Aorta (tissue), 5 donors: ENCODE measurements at regions of chr13 and their contacts with region 1.

Region 1: GRCh38 chr13:24270639-24271141 is 38.7 kb upstream of the C1QTNF9 start:
- DNase-seq: peak; percentile 86 to 90
- ATAC-seq: peak; percentile 87
- H3K4me3 ChIP-seq: peak overlapping the region; percentile 46 to 83
- H3K27ac ChIP-seq: peak overlapping the region in 1 of 2 donors; percentile 90
- H3K4me1 ChIP-seq: no peaks in the 10 kb centered on the region
- H3K27me3 ChIP-seq: no peaks in the 10 kb centered on the region

Region 2: DNA sequence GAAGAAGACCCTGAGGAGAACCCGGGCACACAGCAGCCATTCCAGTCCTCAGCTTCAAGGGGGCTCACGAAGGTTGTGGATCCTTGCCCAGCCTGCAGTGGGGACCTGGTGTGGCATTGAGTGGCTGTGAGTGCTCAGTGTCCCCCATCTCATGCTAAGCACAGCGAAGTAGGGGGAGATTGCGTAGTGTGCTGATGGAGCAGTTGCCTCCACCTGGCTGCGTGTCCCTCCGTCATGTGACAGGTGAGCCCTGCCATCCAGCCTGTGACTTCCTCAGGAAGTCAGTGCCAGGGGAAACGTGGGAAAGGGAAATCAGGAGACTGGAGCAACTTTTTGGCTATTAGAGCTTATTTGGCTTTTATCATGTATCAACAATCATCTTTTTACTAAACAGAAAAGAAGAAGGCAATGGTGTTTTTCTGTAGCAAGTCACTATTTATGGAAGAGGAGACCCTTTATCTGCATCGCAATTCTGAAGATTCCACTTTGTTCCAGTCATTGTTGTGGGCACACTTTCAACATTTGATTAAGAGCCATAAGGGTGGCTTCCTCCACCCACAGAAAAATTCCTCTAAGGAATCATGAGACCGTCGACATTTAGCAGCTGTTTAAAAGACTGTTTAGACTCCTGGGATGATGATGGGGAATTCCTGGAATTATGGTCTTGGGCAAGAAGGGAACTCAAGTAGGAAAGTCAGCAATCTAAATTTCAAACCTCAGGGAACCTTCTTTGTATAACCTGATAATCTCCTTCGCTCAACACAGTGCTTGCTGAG is 237.0 kb before region 1 on chr13:
- intact Hi-C with region 1: loop called in 1 of 2 experiments (anchors 5 kb)
- DNase-seq: no peak
- ATAC-seq: no peak
- H3K4me3 ChIP-seq: no peak overlapping the region
- H3K27ac ChIP-seq: peak overlapping the region in 1 of 2 donors; percentile 81
- H3K4me1 ChIP-seq: peaks cover 5 to 7% of the 10 kb centered on the region in 2 donors
- H3K27me3 ChIP-seq: no peaks in the 10 kb centered on the region

Region 3: DNA sequence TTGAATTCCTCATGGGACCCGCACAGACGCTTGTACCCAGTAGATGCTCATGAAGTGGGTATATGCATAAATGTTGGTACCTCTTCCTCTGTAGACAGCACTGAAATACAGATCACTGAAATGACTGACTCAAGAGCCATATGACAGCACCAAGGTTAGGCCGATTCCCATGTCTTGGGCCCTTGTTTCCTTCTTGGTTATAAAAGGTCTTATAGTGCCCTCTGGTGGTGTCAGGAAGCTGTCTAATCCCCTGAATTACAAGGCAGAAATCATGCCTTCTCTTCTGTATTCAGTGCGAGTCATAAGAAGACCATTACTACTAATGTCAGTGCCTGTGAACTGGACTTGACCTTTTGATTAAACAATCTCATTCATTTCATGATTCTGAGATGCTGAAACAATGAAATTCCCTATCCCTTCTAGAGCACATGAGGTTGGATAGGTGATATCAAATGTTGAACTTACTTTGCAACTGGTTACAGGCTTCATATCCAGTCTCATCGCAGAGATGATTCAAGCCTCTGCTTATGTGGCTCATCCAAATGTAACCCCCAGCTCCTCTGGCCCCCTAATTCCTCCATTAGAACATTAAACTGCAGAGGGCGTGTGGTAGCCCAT is 50.5 kb before region 1 on chr13:
- intact Hi-C with region 1: no loop called
- DNase-seq: no peak
- ATAC-seq: peak; percentile 85
- H3K4me3 ChIP-seq: no peak overlapping the region
- H3K27ac ChIP-seq: no peak overlapping the region
- H3K4me1 ChIP-seq: no peaks in the 10 kb centered on the region
- H3K27me3 ChIP-seq: no peaks in the 10 kb centered on the region